AG04449 (cell line): ENCODE measurements at regions of chrX and their contacts with region 1.

Region 1: GRCh38 chrX:109464231-109464630 is 17.7 kb downstream of the GUCY2F start:
- DNase-seq: no peak
- H3K4me3 ChIP-seq: no peak overlapping the region
- CTCF ChIP-seq: no peak

Region 2: DNA sequence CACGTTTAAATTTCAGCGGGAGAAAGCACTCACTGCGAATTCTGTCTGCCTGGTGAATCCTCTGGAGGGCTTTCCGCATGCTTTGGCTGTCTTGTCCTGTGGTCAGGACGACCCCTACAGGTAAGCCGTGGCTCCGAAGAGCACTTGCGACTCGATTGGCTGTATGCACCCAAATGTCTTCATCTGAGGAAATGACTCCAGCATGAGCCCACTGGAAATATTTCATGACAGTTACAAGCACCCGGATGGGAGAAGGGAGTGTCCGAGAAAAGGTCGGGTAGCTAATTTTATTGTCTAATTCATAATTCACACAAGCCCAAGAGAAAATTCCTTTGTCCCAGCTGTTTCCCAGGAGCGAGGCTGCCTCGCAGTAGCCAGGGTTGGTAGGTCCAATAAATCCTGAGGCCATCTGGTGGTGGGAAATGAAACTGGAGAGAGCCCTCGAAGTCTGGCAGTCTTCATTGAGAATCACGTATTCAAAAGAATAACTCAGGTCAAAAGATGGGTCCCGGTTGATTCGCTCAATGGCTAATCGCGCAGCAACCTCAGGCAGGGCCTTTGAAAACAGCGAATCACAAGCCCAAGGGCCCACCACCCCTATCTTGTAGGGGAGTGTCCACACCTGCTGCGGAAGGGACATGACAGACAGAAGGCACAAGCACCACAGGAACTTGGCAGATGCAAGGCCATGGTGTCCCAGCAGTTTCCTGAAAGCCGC is 11.1 kb after region 1 on chrX:
- CTCF ChIA-PET with region 1: interaction called, 31 read pairs
- POLR2A ChIA-PET with region 1: no interaction called
- DNase-seq: no peak
- H3K4me3 ChIP-seq: no peak overlapping the region
- CTCF ChIP-seq: peak; percentile 47